ENCODE measurements at regions of chr16 and their contacts with region 1.

Region 1: GRCh38 chr16:22307838-22308237 is 10.6 kb downstream of the POLR3E start:
- DNase-seq: no peak
- H3K4me3 ChIP-seq: no peak overlapping the region
- H3K4me3 Mint-ChIP-seq: peak overlapping the region in 1 of 8 donors; percentile 3
- H3K27ac ChIP-seq: no peak overlapping the region
- H3K27ac Mint-ChIP-seq: peak overlapping the region in 4 of 7 donors; percentile 24 to 65 (median 50)
- H3K4me1 ChIP-seq: no peaks in the 10 kb centered on the region
- H3K4me1 Mint-ChIP-seq: peaks cover 1 to 13% (median 8%) of the 10 kb centered on the region in 4 donors
- H3K27me3 ChIP-seq: no peaks in the 10 kb centered on the region
- H3K27me3 Mint-ChIP-seq: no peaks in the 10 kb centered on the region

Region 2: DNA sequence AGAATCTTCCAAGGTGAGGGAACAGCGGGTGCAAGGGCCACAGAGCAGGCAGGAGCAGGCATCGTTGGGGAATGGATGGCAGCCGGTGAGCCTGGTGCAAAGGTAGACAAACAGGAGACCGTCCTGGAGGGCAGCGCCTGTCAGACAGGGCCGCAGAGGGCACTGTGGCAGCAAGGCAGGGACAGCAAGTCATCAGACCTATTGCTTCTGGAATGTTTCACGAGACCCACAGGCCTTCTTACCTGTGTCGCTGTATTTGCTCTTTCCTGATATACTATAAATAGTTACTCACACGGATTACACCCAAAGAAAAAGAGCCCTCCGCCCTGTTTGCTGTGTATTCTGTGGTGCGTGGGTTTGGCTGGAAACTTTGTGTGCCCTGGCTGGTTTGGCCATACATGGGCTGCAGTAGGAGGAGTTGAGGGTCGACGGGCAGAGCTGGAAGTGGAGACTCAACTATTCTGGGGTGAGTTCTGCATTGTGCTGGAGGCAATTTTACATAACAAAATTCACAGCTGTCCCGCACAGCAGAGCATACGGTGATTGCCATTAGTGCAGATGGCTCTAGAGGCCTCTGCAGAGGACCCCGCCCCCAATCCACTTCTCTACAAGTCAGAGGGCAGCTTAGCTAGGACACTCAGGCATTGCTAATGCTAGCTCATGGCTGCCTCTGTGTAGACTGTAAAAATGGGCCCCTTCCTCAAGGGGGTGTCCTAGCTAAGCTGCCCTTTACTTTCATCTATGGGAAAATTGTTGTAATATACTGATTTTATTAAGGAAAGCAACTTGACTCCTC is 29.2 kb before region 1 on chr16:
- CTCF ChIA-PET with region 1: no interaction called
- POLR2A ChIA-PET with region 1: no interaction called
- intact Hi-C with region 1: no loop called
- DNase-seq: no peak
- H3K4me3 ChIP-seq: no peak overlapping the region
- H3K4me3 Mint-ChIP-seq: no peak overlapping the region
- H3K27ac ChIP-seq: no peak overlapping the region
- H3K27ac Mint-ChIP-seq: peak overlapping the region in 3 of 7 donors; percentile 42 to 91 (median 65)
- H3K4me1 ChIP-seq: no peaks in the 10 kb centered on the region
- H3K4me1 Mint-ChIP-seq: no peaks in the 10 kb centered on the region
- H3K27me3 ChIP-seq: no peaks in the 10 kb centered on the region
- H3K27me3 Mint-ChIP-seq: no peaks in the 10 kb centered on the region

Region 3: GRCh38 chr16:22321339-22322001 is 13.6 kb after region 1 on chr16:
- CTCF ChIA-PET with region 1: interaction called, 17 read pairs
- POLR2A ChIA-PET with region 1: interaction called, 4 read pairs
- intact Hi-C with region 1: no loop called
- DNase-seq: peak; percentile 73 to 78 (median 74)
- H3K4me3 ChIP-seq: no peak overlapping the region
- H3K4me3 Mint-ChIP-seq: peak overlapping the region in 3 of 8 donors; percentile 22 to 62 (median 26)
- H3K27ac ChIP-seq: no peak overlapping the region
- H3K27ac Mint-ChIP-seq: peak overlapping the region in 6 of 7 donors; percentile 58 to 92 (median 74)
- H3K4me1 ChIP-seq: peaks cover 5% of the 10 kb centered on the region
- H3K4me1 Mint-ChIP-seq: peaks cover 4 to 10% (median 6%) of the 10 kb centered on the region in 4 donors
- H3K27me3 ChIP-seq: no peaks in the 10 kb centered on the region
- H3K27me3 Mint-ChIP-seq: no peaks in the 10 kb centered on the region

Region 4: GRCh38 chr16:22333457-22333994 is 25.7 kb after region 1 on chr16:
- CTCF ChIA-PET with region 1: no interaction called
- POLR2A ChIA-PET with region 1: no interaction called
- intact Hi-C with region 1: no loop called
- DNase-seq: no peak
- H3K4me3 ChIP-seq: no peak overlapping the region
- H3K4me3 Mint-ChIP-seq: no peak overlapping the region
- H3K27ac ChIP-seq: no peak overlapping the region
- H3K27ac Mint-ChIP-seq: peak overlapping the region in 3 of 7 donors; percentile 41 to 74 (median 57)
- H3K4me1 ChIP-seq: no peaks in the 10 kb centered on the region
- H3K4me1 Mint-ChIP-seq: peaks cover 14 to 28% (median 19%) of the 10 kb centered on the region in 4 donors
- H3K27me3 ChIP-seq: no peaks in the 10 kb centered on the region
- H3K27me3 Mint-ChIP-seq: no peaks in the 10 kb centered on the region